Breast epithelium (tissue), 4 donors: ENCODE measurements at regions of chr6 and their contacts with region 1.

Region 1: GRCh38 chr6:164442572-164442971 is 866.8 kb downstream of the C6orf118 start:
- DNase-seq: no peak
- H3K4me3 ChIP-seq: no peak overlapping the region
- H3K27ac ChIP-seq: no peak overlapping the region
- H3K4me1 ChIP-seq: no peaks in the 10 kb centered on the region
- H3K27me3 ChIP-seq: no peaks in the 10 kb centered on the region
- CTCF ChIP-seq: no peak
- POLR2A ChIP-seq: no peak

Region 2: DNA sequence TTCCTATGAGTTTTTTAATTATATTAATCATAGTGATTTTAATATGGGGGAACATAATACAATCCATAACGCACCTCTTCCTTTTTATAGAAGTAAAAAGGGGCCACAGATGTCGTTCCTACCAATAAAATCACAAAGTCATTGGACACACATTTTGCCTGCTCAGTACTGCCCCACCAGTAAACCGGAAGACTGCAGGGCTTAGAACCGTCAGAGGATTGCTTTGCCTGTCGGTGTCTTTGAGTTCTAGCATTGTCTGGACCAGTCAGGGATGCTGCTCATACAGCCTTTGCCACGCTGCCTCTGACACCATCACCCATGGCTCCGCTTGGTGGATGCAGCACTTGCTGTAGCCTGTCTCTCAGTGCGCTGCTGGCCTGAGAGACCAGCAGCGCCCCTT is 13.3 kb after region 1 on chr6:
- intact Hi-C with region 1: no loop called
- DNase-seq: no peak
- H3K4me3 ChIP-seq: no peak overlapping the region
- H3K27ac ChIP-seq: no peak overlapping the region
- H3K4me1 ChIP-seq: no peaks in the 10 kb centered on the region
- H3K27me3 ChIP-seq: no peaks in the 10 kb centered on the region
- CTCF ChIP-seq: no peak
- POLR2A ChIP-seq: no peak

Region 3: DNA sequence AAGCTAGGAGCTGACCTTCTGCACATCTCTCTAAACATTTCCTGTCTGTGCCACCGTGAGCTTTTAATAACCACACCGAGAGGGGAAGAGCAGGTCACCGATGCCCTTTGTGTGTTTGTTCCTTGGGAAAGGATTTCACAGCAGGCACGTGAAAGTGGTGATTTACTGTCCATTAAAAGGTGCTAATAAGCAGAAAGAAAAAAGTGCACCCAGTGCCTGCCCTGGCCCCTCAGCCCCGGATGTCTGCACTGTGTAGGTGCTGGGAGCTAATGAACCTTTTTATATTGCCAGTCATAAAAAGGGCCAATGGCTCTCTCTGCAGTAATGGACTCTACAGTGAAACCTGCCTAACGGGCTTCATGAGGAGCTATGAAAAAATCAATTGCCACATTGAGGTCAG is 554.3 kb after region 1 on chr6:
- intact Hi-C with region 1: loop called (anchors 10 kb)
- DNase-seq: no peak
- H3K4me3 ChIP-seq: no peak overlapping the region
- H3K27ac ChIP-seq: no peak overlapping the region
- H3K4me1 ChIP-seq: no peaks in the 10 kb centered on the region
- H3K27me3 ChIP-seq: no peaks in the 10 kb centered on the region
- CTCF ChIP-seq: no peak
- POLR2A ChIP-seq: no peak